ENCODE measurements at regions of chr7 and their contacts with region 1.

Region 1: GRCh38 chr7:26337232-26337865 is 45.7 kb downstream of the SNX10 start:
- DNase-seq: peak; percentile 56
- H3K4me3 ChIP-seq: peak overlapping the region; percentile 59
- H3K27ac ChIP-seq: peak overlapping the region; percentile 85
- H3K4me1 ChIP-seq: peaks cover 43% of the 10 kb centered on the region
- CTCF ChIP-seq: no peak

Region 2: GRCh38 chr7:25968205-25968993 is 368.9 kb before region 1 on chr7:
- CTCF ChIA-PET with region 1: no interaction called
- POLR2A ChIA-PET with region 1: no interaction called
- intact Hi-C with region 1: loop called (anchors 5 kb)
- DNase-seq: peak; percentile 97
- H3K4me3 ChIP-seq: peak overlapping the region; percentile 35
- H3K27ac ChIP-seq: peak overlapping the region; percentile 94
- H3K4me1 ChIP-seq: peaks cover 67% of the 10 kb centered on the region
- CTCF ChIP-seq: no peak; the same call in 1 of the 2 replicates

Region 3: GRCh38 chr7:26291699-26292538 is 45.4 kb before region 1 on chr7 and contains the start of gene SNX10:
- CTCF ChIA-PET with region 1: no interaction called
- POLR2A ChIA-PET with region 1: interaction called, 7 read pairs
- intact Hi-C with region 1: loop called (anchors 1 kb)
- DNase-seq: peak; percentile 91
- H3K4me3 ChIP-seq: peak within 1 kb of the TSS; percentile 99
- H3K27ac ChIP-seq: peak within 1 kb of the TSS; percentile 74
- H3K4me1 ChIP-seq: peaks cover 37% of the 10 kb centered on the region
- CTCF ChIP-seq: peak; percentile 75
- total RNA-seq, gene SNX10: 14.3 and 14.5 TPM in 2 replicates

Region 4: DNA sequence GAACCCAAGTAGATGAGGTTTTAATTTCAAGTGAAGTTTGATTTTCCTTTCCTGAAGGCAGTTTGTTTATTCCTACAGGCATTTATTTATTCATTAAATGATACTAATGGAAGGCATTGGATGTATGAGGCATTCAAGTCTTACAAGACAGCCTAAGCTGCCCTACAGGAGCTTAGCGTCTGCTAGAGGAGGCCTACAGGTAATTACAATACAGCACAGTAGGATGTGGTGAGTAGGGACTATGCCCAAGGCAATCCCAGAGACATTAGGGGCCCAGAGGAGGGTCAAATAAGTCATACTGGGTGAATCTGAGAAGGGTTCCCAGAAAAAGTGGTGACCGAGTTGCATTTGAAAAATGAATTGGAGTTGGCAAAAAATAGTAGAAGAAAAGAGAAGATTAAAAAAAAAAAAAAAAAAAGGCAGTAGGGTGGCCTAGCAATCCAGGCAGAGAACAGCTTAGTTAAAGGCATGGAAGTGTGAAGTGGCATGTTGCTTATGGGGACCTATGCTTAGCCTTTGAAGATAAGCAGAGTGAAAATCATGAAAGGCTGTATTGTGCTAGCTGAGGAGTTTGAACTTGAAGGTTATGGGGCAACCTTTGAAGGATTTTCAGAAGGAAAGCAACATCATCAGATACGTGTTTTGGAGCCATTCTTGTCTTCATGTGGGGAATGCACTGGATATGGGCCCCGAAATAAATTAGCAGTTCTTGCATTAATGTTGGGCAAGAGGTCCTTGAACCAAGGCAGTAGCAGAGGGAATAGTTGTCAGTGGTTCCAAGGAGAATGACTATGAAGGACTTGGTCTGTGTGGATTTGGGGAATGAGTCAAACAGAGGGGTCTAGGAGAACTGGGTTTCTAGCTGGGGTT is 19.8 kb after region 1 on chr7:
- CTCF ChIA-PET with region 1: no interaction called
- POLR2A ChIA-PET with region 1: interaction called, 5 read pairs
- intact Hi-C with region 1: loop called (anchors 1 kb)
- DNase-seq: no peak
- H3K4me3 ChIP-seq: no peak overlapping the region
- H3K27ac ChIP-seq: no peak overlapping the region
- H3K4me1 ChIP-seq: peaks cover 14% of the 10 kb centered on the region
- CTCF ChIP-seq: no peak

Measured in OCI-LY7 (cell line).